Activated naive CD4-positive, alpha-beta T cell treated with anti-CD3 and anti-CD28 coated beads for 36 hours (primary cell): ENCODE measurements at regions of chr3 and their contacts with region 1.

Region 1: DNA sequence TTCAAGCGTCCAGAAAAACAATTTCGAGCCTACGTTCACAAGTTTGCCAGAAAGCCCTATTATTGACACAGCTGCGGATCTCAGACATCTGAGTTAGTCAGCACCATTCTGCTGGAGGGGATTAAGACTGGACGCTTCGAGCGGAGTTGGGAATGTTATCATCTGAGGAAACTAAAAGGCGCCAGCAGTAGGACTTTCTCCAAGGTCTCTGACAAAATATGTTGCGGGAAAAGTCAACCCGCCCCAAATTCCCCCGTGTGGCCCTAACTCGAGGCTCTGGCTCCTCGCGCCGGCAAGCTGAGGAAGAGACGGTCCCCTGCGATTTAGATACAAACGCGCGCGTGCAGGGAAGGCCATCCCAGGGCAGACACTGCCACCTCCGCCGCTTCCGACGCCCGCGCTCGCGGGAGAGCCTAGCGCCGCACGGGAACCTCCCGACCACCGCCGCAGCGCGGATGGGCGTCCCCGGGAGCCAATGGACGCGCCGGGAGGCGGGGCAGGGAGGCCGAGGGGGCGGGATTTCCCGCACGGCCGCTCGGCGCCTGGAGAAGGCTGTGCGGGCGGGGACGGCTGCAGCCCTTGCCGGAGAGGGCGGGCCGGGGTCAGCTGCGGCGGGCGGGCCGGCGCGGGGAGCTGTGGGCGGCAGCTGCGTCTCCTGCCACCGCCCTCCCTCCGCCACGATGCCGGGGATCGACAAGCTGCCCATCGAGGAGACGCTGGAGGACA is at the start of gene APPL1:
- DNase-seq: peak; percentile 93
- H3K4me3 Mint-ChIP-seq: peak within 1 kb of the TSS; percentile 88
- H3K27ac Mint-ChIP-seq: peak within 1 kb of the TSS; percentile 63
- H3K4me1 Mint-ChIP-seq: peaks cover 26% of the 10 kb centered on the region
- H3K27me3 Mint-ChIP-seq: no peaks in the 10 kb centered on the region
- total RNA-seq, gene APPL1: 30.8 to 35.1 TPM

Region 2: DNA sequence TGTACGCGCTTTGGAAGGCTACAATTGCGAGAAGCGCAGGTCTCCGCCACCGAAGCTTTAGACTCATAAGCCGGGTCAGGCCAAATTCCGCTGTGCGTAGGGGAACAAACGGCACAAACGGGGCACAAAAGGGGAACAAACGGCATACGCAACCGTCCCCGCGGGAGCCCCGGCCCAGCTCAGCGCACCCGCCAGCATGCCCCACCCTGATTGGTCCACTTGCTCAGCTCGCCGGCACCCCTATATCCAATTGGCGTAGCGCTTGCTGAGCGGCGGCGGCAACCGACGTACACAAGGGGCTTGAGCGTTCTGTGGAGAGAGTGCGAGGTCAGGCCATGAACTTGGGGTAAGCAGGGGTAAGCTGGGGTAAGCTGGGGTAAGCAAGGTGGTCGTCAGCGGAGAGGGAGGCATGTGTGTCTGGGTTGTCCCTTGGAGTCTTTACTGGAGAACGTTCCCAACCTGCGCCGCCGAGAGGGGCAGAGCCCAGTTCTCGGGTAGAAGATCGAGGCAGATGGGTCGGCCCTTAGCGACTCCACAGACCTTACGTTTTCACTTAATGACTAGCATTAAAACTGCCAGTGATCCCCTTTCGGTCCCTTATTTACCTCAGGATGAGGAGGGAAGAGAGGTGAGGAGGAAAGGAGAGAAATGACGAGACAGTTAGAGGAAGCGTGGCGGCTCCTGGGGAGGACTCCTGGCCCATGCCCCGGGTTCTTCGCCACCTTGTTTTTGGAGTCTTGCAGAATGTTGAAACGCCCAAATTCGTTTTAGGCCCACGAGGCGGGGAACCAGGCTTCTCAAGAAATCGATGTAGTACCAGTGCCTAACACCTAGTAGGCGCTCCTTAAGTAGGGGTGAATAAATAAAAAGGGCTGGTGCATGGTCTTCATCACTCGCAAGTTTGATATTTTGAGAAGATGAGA is 670.2 kb before region 1 on chr3 and contains the start of gene CCDC66:
- CTCF ChIA-PET with region 1: no interaction called
- intact Hi-C with region 1: loop called (anchors 5 kb)
- DNase-seq: peak; percentile 97
- H3K4me3 Mint-ChIP-seq: peak within 1 kb of the TSS; percentile 94
- H3K27ac Mint-ChIP-seq: peak within 1 kb of the TSS; percentile 97
- H3K4me1 Mint-ChIP-seq: peaks cover 26% of the 10 kb centered on the region
- H3K27me3 Mint-ChIP-seq: no peaks in the 10 kb centered on the region
- total RNA-seq, gene CCDC66: 29.0 to 29.3 TPM

Region 3: DNA sequence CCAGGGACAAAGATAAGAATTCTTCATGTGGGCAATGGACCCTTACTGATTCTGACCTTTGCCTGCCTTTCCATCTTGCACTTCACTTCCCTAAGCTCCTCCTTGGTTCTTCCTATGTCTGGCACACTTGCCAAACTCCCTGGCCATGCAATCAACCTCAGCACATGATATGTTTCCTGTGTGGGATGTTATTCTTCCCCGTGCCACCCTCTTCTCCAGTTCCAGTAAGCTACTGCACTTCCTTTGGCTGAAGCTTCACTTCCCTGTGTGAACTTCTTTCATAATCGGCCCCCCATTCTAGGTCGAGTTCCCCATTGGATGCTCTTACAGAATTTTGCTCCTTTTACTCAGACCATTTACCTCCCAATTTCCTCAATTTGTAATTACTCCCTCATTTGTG is 533.6 kb before region 1 on chr3:
- CTCF ChIA-PET with region 1: no interaction called
- intact Hi-C with region 1: loop called (anchors 5 kb)
- DNase-seq: no peak
- H3K4me3 Mint-ChIP-seq: peak overlapping the region; percentile 26
- H3K27ac Mint-ChIP-seq: peak overlapping the region; percentile 19
- H3K4me1 Mint-ChIP-seq: peaks cover 40% of the 10 kb centered on the region
- H3K27me3 Mint-ChIP-seq: no peaks in the 10 kb centered on the region

Region 4: DNA sequence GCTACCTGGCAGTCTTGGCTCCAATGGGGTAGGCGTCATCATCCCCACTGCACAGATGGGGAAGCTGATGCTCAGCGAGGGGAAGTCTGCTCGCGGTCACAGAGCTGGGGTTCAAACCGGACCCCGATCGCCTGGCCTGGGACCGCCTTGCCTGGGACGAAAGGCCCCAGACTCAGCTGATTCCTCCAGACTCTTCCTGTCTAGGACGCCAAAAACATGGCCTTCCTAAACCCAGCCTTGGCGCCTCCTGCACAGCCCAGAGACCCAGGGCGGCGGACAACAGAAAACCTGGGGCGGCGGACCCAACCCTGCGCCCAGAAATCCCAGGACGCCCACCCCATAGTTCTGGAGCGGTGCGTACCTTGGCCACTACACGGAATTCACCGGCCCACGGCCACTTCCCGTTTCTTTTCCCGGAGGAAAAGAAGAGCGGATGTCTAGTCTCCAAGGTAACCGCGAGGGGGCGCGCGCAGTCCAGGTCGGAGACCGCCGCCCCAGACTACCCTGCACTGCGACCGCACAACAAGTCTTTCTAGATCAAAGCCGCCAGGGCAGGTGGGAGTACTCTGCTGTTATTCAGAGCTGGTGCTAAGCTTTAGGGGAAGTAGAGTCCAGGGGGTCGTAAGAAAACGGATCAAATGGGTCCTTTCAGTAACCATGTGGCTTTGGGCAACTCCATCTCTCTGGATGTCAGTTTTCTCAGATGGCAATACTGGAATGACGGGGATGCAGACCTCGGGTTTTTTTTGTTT is 57.3 kb before region 1 on chr3:
- CTCF ChIA-PET with region 1: interaction called, 10 read pairs
- intact Hi-C with region 1: loop called (anchors 1 kb)
- DNase-seq: peak; percentile 77
- H3K4me3 Mint-ChIP-seq: peak overlapping the region; percentile 60
- H3K27ac Mint-ChIP-seq: no peak overlapping the region
- H3K4me1 Mint-ChIP-seq: peaks cover 2% of the 10 kb centered on the region
- H3K27me3 Mint-ChIP-seq: peaks cover 49% of the 10 kb centered on the region

Region 5: GRCh38 chr3:57692259-57693147 is 465.1 kb after region 1 on chr3 and contains the start of gene DENND6A:
- CTCF ChIA-PET with region 1: no interaction called
- intact Hi-C with region 1: loop called (anchors 5 kb)
- DNase-seq: peak; percentile 70
- H3K4me3 Mint-ChIP-seq: peak within 1 kb of the TSS; percentile 89
- H3K27ac Mint-ChIP-seq: peak within 1 kb of the TSS; percentile 90
- H3K4me1 Mint-ChIP-seq: peaks cover 35% of the 10 kb centered on the region
- H3K27me3 Mint-ChIP-seq: no peaks in the 10 kb centered on the region
- total RNA-seq, gene DENND6A: 12.3 to 12.4 TPM